ENCODE measurements at regions of chr20 and their contacts with region 1.

Region 1: GRCh38 chr20:53524589-53525312 is 68.9 kb downstream of the ZNF217 start:
- DNase-seq: no peak
- ATAC-seq: no peak
- H3K4me3 ChIP-seq: no peak overlapping the region
- H3K4me3 Mint-ChIP-seq: no peak overlapping the region
- H3K27ac ChIP-seq: no peak overlapping the region
- H3K27ac Mint-ChIP-seq: no peak overlapping the region
- H3K4me1 ChIP-seq: no peaks in the 10 kb centered on the region
- H3K4me1 Mint-ChIP-seq: no peaks in the 10 kb centered on the region
- H3K27me3 ChIP-seq: no peaks in the 10 kb centered on the region
- H3K27me3 Mint-ChIP-seq: no peaks in the 10 kb centered on the region
- CTCF ChIP-seq: no peak

Region 2: GRCh38 chr20:53321596-53321995 is 203.2 kb before region 1 on chr20:
- CTCF ChIA-PET with region 1: no interaction called
- POLR2A ChIA-PET with region 1: no interaction called
- intact Hi-C with region 1: no loop called
- DNase-seq: no peak
- ATAC-seq: no peak
- H3K4me3 ChIP-seq: no peak overlapping the region
- H3K4me3 Mint-ChIP-seq: no peak overlapping the region
- H3K27ac ChIP-seq: no peak overlapping the region
- H3K27ac Mint-ChIP-seq: no peak overlapping the region
- H3K4me1 ChIP-seq: peaks cover 9% of the 10 kb centered on the region
- H3K4me1 Mint-ChIP-seq: peaks cover 22% of the 10 kb centered on the region
- H3K27me3 ChIP-seq: no peaks in the 10 kb centered on the region
- H3K27me3 Mint-ChIP-seq: peaks cover 2% of the 10 kb centered on the region
- CTCF ChIP-seq: no peak

Region 3: DNA sequence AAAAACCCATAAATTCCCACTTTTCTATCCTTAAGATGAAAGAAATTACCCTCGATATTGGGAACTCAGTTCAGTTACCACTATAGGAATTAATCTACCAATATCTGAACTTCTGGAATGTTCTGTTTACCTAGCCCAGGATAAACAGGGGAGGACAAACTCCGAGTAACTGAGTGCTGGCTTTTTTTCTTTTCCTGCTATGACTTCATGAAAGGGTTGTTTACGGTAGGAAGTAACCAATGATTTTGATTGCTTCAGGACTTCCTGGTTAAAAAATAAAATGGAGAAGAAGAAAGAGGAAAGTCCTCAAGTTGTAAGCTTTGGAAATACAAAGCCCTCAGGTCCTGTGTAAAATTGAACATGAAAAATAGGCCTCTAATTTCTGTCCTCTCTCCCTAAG is 98.8 kb before region 1 on chr20:
- CTCF ChIA-PET with region 1: no interaction called
- POLR2A ChIA-PET with region 1: no interaction called
- intact Hi-C with region 1: loop called in 1 of 2 experiments (anchors 10 kb)
- DNase-seq: no peak
- ATAC-seq: no peak
- H3K4me3 ChIP-seq: no peak overlapping the region
- H3K4me3 Mint-ChIP-seq: no peak overlapping the region
- H3K27ac ChIP-seq: no peak overlapping the region
- H3K27ac Mint-ChIP-seq: no peak overlapping the region
- H3K4me1 ChIP-seq: no peaks in the 10 kb centered on the region
- H3K4me1 Mint-ChIP-seq: no peaks in the 10 kb centered on the region
- H3K27me3 ChIP-seq: no peaks in the 10 kb centered on the region
- H3K27me3 Mint-ChIP-seq: no peaks in the 10 kb centered on the region
- CTCF ChIP-seq: no peak

Region 4: GRCh38 chr20:53957451-53958172 is 432.9 kb after region 1 on chr20:
- CTCF ChIA-PET with region 1: no interaction called
- POLR2A ChIA-PET with region 1: no interaction called
- intact Hi-C with region 1: no loop called
- DNase-seq: no peak
- ATAC-seq: no peak
- H3K4me3 ChIP-seq: no peak overlapping the region
- H3K4me3 Mint-ChIP-seq: no peak overlapping the region
- H3K27ac ChIP-seq: no peak overlapping the region
- H3K27ac Mint-ChIP-seq: no peak overlapping the region
- H3K4me1 ChIP-seq: no peaks in the 10 kb centered on the region
- H3K4me1 Mint-ChIP-seq: no peaks in the 10 kb centered on the region
- H3K27me3 ChIP-seq: no peaks in the 10 kb centered on the region
- H3K27me3 Mint-ChIP-seq: peaks cover 3% of the 10 kb centered on the region
- CTCF ChIP-seq: no peak